Activated naive CD8-positive, alpha-beta T cell treated with anti-CD3 and anti-CD28 coated beads, Interleukin-2, amount 10 ng/mL, durations not matched to agents 7 days and 5 days (primary cell): ENCODE measurements at regions of chr1 and their contacts with region 1.

Region 1: GRCh38 chr1:23959041-23959460 is 577 bp upstream of the PNRC2 start:
- DNase-seq: peak; percentile 84
- ATAC-seq: peak; percentile 76
- H3K4me3 Mint-ChIP-seq: peak overlapping the region; percentile 100
- H3K27ac Mint-ChIP-seq: peak overlapping the region; percentile 100
- H3K4me1 Mint-ChIP-seq: peaks cover 36% of the 10 kb centered on the region
- H3K27me3 Mint-ChIP-seq: no peaks in the 10 kb centered on the region

Region 2: GRCh38 chr1:23790696-23791515 is 168.1 kb before region 1 on chr1 and contains the start of gene LYPLA2:
- POLR2A ChIA-PET with region 1: interaction called, 12 read pairs
- DNase-seq: peak; percentile 87
- ATAC-seq: peak; percentile 92
- H3K4me3 Mint-ChIP-seq: peak within 1 kb of the TSS; percentile 98
- H3K27ac Mint-ChIP-seq: peak within 1 kb of the TSS; percentile 98
- H3K4me1 Mint-ChIP-seq: peaks cover 12% of the 10 kb centered on the region
- H3K27me3 Mint-ChIP-seq: no peaks in the 10 kb centered on the region
- total RNA-seq, gene LYPLA2: 67.0 to 82.5 TPM

Region 3: DNA sequence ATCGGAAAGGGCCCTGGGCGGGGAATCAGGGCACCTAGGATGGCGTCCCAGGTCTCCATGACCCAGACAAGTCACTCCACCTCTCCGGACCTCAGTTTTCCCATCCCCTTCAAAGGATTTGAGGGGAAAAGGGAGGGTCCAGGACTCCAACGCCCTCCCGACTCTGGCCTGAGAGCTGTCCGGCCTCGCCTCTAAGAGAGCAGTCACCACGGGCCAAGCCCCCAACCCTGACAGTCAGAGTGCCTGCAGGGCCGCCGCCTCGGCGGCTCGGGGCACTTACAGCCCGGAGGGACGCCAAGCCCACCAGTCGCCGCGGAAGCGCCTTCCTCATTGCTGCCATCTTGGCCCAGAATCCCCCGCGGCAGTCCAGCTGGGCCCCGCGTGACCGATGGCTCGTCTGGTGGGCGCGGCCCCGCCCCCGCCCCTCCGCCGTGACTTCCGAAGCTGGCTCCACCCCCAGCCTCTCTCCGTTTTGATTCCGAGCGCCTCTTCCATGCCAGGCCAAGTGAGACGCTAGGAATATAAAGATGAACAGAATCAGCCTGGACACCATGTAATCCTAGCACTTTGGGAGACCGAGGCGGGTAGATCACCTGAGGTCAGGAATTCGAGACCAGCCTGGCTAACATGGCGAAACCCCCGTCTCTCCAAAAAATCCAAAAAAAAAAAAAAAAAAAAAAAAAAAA is 133.8 kb before region 1 on chr1 and contains the start of gene HMGCL:
- POLR2A ChIA-PET with region 1: interaction called, 13 read pairs
- DNase-seq: peak; percentile 90
- ATAC-seq: peak; percentile 98
- H3K4me3 Mint-ChIP-seq: peak within 1 kb of the TSS; percentile 88
- H3K27ac Mint-ChIP-seq: peak within 1 kb of the TSS; percentile 85
- H3K4me1 Mint-ChIP-seq: peaks cover 14% of the 10 kb centered on the region
- H3K27me3 Mint-ChIP-seq: no peaks in the 10 kb centered on the region
- total RNA-seq, gene HMGCL: 35.4 to 37.2 TPM

Region 4: DNA sequence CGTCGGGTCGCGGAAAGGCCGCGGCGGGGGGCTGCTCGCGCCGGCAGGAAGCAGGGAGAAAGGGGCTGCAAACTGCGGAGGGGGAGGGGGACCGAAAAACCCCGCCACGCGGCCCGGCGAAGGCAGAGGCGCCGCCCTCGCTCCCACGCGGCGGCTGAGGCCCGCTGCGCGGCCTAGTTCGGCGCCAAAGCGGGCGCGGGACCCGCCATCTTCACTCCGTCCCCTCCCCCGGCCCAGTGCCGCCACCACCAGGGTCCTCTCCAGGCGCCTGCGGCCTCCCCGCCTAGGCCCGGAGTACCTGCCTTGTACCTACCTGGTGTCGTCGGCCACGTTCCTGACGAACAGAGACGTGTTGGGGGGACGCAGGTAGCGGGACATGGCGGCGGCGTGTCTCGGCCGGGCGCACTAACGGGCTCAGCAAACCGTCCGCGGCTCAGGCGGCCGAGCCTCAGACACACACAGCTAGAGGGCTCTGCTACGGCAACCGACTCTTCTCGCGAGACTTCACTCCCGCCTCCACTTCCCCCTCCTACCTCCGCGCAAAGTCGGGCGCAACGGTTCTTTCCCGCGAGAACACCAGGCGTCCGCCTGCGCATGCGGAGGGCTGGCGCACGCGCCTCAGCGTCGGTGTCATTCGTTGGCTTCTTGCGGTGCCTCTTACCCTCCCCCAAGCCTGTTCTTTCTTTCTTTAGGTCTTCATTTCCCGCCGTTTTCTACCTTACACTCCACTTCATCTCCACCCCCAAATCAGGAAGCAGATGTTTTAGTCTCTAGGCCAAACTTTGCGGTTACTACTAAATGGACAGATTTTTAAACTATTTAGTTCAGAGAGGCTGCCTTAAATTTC is 21.1 kb after region 1 on chr1 and contains the start of gene SRSF10:
- POLR2A ChIA-PET with region 1: interaction called, 155 read pairs
- DNase-seq: peak; percentile 95
- ATAC-seq: peak; percentile 91
- H3K4me3 Mint-ChIP-seq: peak within 1 kb of the TSS; percentile 93
- H3K27ac Mint-ChIP-seq: peak within 1 kb of the TSS; percentile 98
- H3K4me1 Mint-ChIP-seq: peaks cover 37% of the 10 kb centered on the region
- H3K27me3 Mint-ChIP-seq: no peaks in the 10 kb centered on the region
- total RNA-seq, gene SRSF10: 202 to 223 TPM

Region 5: DNA sequence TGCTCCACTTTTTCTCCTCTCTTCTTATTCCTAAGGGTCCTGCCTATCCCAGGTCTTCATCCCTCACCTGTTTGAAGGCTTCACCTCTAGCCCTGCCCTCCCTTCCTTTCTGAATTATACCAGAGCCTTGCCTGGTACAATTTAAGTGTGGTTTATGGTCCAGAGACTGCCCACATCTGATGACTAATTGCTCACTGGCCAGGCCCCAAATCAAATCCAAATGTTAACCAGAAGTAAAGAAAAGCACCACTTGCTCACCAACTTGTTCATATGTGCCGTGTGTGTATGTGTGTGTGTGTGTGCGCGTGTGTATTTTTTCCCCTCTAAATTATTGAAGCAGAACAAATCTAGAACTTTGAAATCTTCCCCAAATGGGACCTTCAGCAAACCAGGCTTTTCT is 126.5 kb after region 1 on chr1:
- POLR2A ChIA-PET with region 1: no interaction called
- DNase-seq: no peak
- ATAC-seq: no peak
- H3K4me3 Mint-ChIP-seq: no peak overlapping the region
- H3K27ac Mint-ChIP-seq: no peak overlapping the region
- H3K4me1 Mint-ChIP-seq: no peaks in the 10 kb centered on the region
- H3K27me3 Mint-ChIP-seq: peaks cover 4% of the 10 kb centered on the region